OCI-LY7 (cell line): ENCODE measurements at regions of chr3 and their contacts with region 1.

Region 1: GRCh38 chr3:14203521-14204079 is 25.0 kb downstream of the LSM3 start:
- DNase-seq: peak; percentile 70
- H3K4me3 ChIP-seq: no peak overlapping the region
- H3K27ac ChIP-seq: no peak overlapping the region
- H3K4me1 ChIP-seq: no peaks in the 10 kb centered on the region
- CTCF ChIP-seq: peak; percentile 91

Region 2: GRCh38 chr3:13895155-13896105 is 308.2 kb before region 1 on chr3:
- CTCF ChIA-PET with region 1: no interaction called
- POLR2A ChIA-PET with region 1: no interaction called
- intact Hi-C with region 1: loop called (anchors 10 kb)
- DNase-seq: peak; percentile 82
- H3K4me3 ChIP-seq: peak overlapping the region; percentile 62
- H3K27ac ChIP-seq: no peak overlapping the region
- H3K4me1 ChIP-seq: peaks cover 19% of the 10 kb centered on the region
- CTCF ChIP-seq: no peak

Region 3: DNA sequence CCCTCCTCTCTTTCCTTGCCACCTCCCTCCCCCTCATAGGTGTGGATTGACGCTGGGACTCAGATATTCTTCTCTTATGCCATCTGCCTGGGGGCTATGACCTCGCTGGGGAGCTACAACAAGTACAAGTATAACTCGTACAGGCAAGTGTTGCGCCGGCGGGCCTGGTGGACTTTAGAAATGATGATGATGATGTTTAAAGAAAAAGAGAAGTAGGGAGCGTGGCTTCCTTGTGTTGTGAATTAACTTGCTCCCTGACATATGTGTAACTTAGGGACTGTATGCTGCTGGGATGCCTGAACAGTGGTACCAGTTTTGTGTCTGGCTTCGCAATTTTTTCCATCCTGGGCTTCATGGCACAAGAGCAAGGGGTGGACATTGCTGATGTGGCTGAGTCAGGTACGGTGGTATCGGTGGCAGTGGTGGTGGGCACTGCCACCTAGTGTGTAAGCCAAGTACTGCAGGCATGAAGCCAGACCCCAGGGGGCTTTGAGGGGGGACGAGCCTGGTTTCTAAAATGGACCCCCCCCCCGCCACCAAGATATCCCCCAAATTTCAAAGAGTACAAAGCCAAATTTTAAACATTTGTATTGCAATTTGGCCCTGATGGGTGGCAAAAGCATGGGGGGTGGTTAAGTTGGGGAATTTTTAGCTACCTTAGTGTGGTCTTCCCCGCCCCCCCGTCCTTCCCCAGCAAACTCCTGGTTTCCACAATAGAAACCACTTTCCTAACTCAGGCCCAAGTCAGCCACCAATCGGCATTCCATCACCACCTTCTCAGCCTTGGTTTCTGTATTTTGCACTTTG is 264.4 kb after region 1 on chr3:
- CTCF ChIA-PET with region 1: no interaction called
- POLR2A ChIA-PET with region 1: interaction called, 3 read pairs
- intact Hi-C with region 1: loop called (anchors 2 kb)
- DNase-seq: peak; percentile 53
- H3K4me3 ChIP-seq: no peak overlapping the region
- H3K27ac ChIP-seq: no peak overlapping the region
- H3K4me1 ChIP-seq: no peaks in the 10 kb centered on the region
- CTCF ChIP-seq: peak; percentile 92

Region 4: DNA sequence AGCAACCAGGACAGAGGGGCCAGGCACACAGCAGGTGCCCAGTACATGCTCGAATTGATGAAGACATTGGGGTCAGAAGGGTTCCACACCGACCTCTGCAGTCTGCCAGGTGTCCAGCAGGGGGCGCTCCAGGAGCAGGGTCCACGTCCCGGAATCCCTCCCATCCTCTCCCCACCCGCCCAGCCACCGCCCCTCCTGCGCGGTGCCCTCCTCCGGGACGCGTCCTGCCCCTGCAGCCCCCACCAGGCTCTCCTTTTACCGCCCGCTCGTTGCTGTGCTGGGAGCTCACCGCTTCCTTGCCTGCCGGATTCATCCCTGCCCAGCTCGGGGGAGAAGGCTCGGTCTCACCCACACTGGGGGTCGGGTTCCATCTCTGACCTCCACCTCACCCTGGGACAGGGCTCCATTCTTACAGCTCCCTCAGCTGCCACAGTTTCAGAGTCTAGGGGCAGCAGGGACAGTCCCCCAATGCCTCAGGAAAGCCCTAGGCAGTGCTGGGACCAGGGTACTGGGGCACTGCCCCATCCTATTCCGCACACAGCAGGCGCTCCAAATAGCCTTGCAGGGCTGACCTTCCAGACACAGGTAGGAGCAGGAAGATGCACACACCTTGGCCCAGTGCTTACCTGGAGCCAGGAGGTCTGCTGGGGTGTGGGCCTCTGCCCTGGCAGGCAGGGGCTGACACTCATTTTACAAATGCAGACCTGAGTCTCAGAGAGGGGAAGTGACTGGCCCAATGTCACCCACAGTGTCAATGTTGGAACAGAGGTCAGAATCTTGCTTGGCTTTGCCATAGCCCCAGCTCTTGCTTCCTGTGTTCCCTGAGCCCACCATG is 305.6 kb after region 1 on chr3:
- CTCF ChIA-PET with region 1: no interaction called
- POLR2A ChIA-PET with region 1: no interaction called
- intact Hi-C with region 1: loop called (anchors 5 kb)
- DNase-seq: peak; percentile 69
- H3K4me3 ChIP-seq: no peak overlapping the region
- H3K27ac ChIP-seq: no peak overlapping the region
- H3K4me1 ChIP-seq: no peaks in the 10 kb centered on the region
- CTCF ChIP-seq: peak; percentile 84

Region 5: DNA sequence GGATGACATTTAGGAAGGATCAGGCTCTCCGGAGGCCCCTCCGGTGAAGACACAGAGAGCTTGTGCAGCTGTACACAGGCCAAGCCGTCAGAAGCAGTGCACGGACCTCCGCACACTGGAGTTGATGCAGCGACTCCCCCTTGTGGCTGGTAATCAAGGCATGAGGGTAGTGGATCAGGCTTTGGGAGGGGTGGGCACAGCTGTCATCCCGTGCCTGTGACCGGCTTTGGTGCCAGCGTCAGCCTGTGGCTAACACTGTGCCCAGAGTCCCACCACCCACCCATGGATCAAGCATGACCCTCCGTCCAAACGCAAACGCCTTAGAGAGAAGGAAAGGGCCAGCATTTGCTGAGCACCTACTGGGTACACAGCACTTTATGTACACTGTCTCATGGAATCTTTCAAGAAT is 344.7 kb after region 1 on chr3:
- CTCF ChIA-PET with region 1: no interaction called
- POLR2A ChIA-PET with region 1: no interaction called
- intact Hi-C with region 1: loop called (anchors 1 kb)
- DNase-seq: peak; percentile 61
- H3K4me3 ChIP-seq: no peak overlapping the region
- H3K27ac ChIP-seq: no peak overlapping the region
- H3K4me1 ChIP-seq: no peaks in the 10 kb centered on the region
- CTCF ChIP-seq: peak; percentile 80

Region 6: DNA sequence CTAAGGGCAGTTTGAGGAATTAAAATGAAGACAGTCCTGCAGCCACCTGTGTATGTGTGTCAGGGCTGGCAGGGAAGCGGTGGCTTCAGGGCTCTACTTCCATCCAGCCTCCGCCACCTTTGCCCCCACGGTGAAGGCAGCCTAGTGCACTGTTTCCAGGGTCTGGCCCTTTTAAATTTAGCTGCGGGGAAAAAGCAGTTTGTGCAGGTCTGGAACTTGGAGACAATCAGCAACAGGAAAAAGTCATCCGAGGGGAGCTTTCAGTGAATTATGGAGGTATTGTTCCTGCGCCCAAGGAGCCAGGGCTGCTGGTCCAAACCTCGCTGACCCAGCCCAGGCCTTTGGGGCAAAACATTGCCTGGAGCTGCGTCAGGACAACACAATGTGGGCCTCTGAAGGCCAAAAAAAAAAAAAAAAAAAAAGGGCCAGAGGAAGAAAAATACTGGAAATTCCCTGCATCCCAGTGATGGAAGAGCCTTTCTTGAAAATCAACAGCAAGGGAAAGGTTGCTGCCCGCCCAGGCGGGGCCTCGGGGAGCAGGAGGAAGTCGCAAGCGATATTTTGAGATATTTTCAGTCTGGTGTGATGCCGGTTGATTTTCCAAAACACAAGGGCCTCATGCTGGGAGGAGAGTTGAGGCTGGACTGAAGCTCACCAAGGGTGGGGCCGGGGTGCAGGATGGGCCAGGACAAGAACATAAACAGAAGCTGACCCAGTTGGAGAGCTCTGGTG is 589.7 kb after region 1 on chr3:
- CTCF ChIA-PET with region 1: no interaction called
- POLR2A ChIA-PET with region 1: no interaction called
- intact Hi-C with region 1: no loop called
- DNase-seq: no peak
- H3K4me3 ChIP-seq: no peak overlapping the region
- H3K27ac ChIP-seq: no peak overlapping the region
- H3K4me1 ChIP-seq: no peaks in the 10 kb centered on the region
- CTCF ChIP-seq: no peak